ENCODE measurements at regions of chr15 and their contacts with region 1.

Region 1: DNA sequence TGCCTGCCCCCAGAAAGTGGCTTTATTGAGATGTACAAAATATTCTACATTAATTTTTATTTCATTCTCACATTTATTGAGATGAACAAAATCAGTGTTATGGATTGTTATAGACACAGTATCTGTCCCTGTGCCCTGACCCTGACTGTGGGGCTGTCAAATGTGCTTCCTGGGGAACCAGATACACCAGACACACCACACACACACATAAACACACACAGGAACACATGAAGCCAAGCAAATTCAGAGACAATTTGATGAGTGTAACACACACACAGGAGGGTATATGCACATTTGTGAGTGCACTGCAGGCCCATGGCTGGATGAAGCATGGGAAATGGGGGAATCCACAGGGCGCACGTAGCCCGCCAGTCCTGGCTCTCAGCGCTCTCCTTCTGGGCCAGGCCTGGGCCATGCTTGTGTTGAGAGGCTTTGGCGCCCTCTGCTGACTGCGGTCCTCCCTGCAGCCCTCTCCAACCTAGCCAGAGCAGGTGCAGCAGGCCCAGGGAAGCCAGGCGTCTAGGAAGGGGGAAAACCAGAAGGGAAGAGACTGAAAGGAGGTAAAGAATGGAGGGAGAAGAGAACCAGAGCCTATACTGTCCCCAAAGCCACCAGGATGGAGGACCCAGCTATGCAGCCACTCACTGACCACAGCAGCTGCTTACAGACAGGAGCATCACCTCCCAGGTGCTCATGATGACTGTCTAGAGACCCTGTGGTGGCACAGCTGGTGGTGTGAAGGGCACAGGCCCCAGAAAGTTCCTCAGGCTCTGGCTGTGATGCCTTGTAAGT is 18.0 kb upstream of the LOXL1 start:
- DNase-seq: peak; percentile 86
- ATAC-seq: peak; percentile 98
- H3K4me3 Mint-ChIP-seq: no peak overlapping the region
- H3K27ac Mint-ChIP-seq: no peak overlapping the region
- H3K4me1 Mint-ChIP-seq: peaks cover 27% of the 10 kb centered on the region
- H3K27me3 Mint-ChIP-seq: no peaks in the 10 kb centered on the region

Region 2: DNA sequence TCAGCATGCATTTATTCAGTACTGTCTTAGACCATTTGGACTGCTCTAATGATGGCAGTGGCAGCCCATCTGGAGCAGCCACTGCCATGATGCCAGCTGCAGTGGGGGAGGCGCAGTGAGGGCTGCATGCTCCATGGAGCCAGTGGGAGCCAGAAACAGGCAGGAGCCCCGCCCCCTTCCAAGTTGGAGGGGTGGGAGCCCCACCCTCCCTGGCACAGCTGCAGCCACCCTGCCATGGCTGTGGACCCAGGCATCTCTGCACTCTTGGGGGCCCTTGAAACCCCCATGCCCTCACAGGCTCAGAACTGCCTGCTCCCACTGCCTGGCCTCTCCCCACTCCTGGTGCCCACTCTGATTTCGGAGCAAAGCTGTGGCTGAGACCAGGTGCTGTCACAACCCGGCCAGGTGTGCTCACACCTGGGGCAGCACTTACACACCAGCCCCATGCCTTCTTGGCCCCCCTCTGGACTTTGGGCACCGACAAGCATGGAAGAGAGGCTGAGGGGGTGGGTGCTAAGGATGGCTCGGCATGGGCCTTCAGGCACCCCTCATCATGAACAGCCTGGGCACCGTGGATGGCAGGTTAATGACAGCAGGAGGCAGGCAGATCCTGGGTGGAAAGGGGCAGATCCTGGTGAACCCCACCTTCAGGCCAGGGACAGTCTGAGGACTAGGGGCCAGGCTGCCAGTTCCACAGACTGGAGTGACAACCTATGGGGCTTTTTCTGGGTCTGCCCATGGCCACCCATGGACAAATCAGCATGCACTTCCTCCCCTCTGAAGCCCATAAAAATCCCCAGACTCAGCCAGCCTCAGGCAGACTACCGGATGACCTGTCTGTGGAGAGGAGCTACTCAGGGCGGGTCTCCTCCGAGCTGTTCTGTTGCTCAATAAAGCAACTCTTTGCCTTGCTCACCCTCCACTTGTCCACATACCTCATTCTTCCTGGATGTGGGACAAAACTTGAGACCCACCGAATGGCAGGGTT is 16.6 kb before region 1 on chr15:
- CTCF ChIA-PET with region 1: interaction called, 78 read pairs
- DNase-seq: no peak
- ATAC-seq: no peak
- H3K4me3 Mint-ChIP-seq: no peak overlapping the region
- H3K27ac Mint-ChIP-seq: no peak overlapping the region
- H3K4me1 Mint-ChIP-seq: peaks cover 6% of the 10 kb centered on the region
- H3K27me3 Mint-ChIP-seq: peaks cover 25% of the 10 kb centered on the region

Region 3: GRCh38 chr15:73897441-73898261 is 10.6 kb before region 1 on chr15:
- CTCF ChIA-PET with region 1: interaction called, 78 read pairs
- DNase-seq: peak; percentile 90
- ATAC-seq: peak; percentile 94
- H3K4me3 Mint-ChIP-seq: no peak overlapping the region
- H3K27ac Mint-ChIP-seq: no peak overlapping the region
- H3K4me1 Mint-ChIP-seq: peaks cover 15% of the 10 kb centered on the region
- H3K27me3 Mint-ChIP-seq: peaks cover 10% of the 10 kb centered on the region